Heart right ventricle (tissue), 16 donors: ENCODE measurements at regions of chr1 and their contacts with region 1.

Region 1: GRCh38 chr1:155591770-155592169 is 18.2 kb upstream of the MSTO1 start:
- DNase-seq: peak in 1 of 2 donors; percentile 50
- ATAC-seq: peak in 7 of 8 donors; percentile 59 to 81 (median 67)
- H3K4me3 ChIP-seq: no peak overlapping the region
- H3K27ac ChIP-seq: no peak overlapping the region
- H3K4me1 ChIP-seq: peaks cover 0 to 6% (median 0%) of the 10 kb centered on the region in 9 donors
- H3K27me3 ChIP-seq: no peaks in the 10 kb centered on the region
- CTCF ChIP-seq: peak in 8 of 9 donors; percentile 20 to 72 (median 65)

Region 2: GRCh38 chr1:155208541-155209311 is 383.0 kb before region 1 on chr1 and contains the start of gene MTX1:
- intact Hi-C with region 1: loop called in 3 of 10 experiments (anchors 2 to 10 kb)
- DNase-seq: peak; percentile 93 to 95
- ATAC-seq: peak; percentile 86 to 92 (median 90)
- H3K4me3 ChIP-seq: peak within 1 kb of the TSS; percentile 64 to 91 (median 82)
- H3K27ac ChIP-seq: peak within 1 kb of the TSS; percentile 98 to 100 (median 100)
- H3K4me1 ChIP-seq: peaks cover 9 to 43% (median 31%) of the 10 kb centered on the region in 9 donors
- H3K27me3 ChIP-seq: no peaks in the 10 kb centered on the region
- CTCF ChIP-seq: no peak
- total RNA-seq, gene MTX1: 13.1 to 25.8 (median 17.1) TPM

Region 3: DNA sequence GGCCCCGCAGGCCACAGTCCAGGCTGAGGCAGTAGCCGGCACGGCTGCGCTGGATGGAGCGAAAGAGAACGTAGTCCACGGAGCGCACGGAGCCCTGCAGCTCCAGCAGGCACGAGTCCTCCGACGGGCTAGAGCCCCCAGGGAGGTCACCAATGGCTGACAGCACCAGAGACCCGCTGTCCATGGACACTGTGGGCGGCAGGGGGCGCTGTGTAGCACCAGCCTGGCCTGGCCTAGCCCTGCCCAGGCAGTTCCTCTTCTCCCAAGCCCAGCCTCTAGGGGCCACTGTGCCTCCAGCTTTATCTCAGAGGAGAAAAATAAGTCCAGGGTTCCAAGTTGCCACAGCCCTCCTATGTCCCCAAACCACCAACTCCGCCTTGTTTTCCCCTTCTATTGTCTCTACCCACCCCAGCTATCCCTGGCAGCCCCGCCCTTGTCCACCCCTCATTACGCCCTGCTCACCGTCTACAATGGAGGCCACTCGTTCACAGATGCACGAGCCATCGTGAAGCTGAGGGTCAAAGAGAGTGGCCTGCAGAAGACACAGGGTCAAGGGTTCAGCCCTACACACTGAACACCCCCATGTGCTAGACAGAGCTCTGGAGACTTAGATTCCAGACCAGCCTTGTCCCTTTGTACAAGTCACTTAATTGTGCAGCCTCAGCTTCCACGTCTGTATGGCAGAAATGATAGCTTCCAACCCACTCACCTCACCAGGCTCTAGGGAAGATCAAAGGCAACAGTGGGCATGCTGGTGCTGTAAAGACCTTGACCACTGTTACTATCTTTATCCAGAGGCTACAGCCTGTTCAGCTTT is 340.9 kb before region 1 on chr1:
- intact Hi-C with region 1: loop called in 8 of 10 experiments (anchors 1 to 10 kb)
- DNase-seq: peak; percentile 93 to 95
- ATAC-seq: peak; percentile 80 to 89 (median 84)
- H3K4me3 ChIP-seq: peak overlapping the region in 7 of 10 donors; percentile 12 to 57 (median 37)
- H3K27ac ChIP-seq: peak overlapping the region in 8 of 10 donors; percentile 15 to 90 (median 38)
- H3K4me1 ChIP-seq: peaks cover 12 to 36% (median 29%) of the 10 kb centered on the region in 9 donors
- H3K27me3 ChIP-seq: no peaks in the 10 kb centered on the region
- CTCF ChIP-seq: peak in 8 of 9 donors; percentile 99 to 100 (median 100)

Region 4: GRCh38 chr1:155329971-155330598 is 261.7 kb before region 1 on chr1:
- intact Hi-C with region 1: loop called in 2 of 10 experiments (anchors 10 kb)
- DNase-seq: no peak
- ATAC-seq: no peak
- H3K4me3 ChIP-seq: no peak overlapping the region
- H3K27ac ChIP-seq: no peak overlapping the region
- H3K4me1 ChIP-seq: peaks cover 0 to 15% (median 7%) of the 10 kb centered on the region in 9 donors
- H3K27me3 ChIP-seq: no peaks in the 10 kb centered on the region
- CTCF ChIP-seq: no peak

Region 5: GRCh38 chr1:155640367-155640766 is 48.6 kb after region 1 on chr1:
- intact Hi-C with region 1: no loop called
- DNase-seq: no peak
- ATAC-seq: no peak
- H3K4me3 ChIP-seq: no peak overlapping the region
- H3K27ac ChIP-seq: no peak overlapping the region
- H3K4me1 ChIP-seq: peaks cover 0 to 28% (median 5%) of the 10 kb centered on the region in 9 donors
- H3K27me3 ChIP-seq: no peaks in the 10 kb centered on the region
- CTCF ChIP-seq: no peak

Region 6: GRCh38 chr1:155651861-155652661 is 60.3 kb after region 1 on chr1:
- intact Hi-C with region 1: loop called in 1 of 10 experiments (anchors 10 kb)
- DNase-seq: no peak
- ATAC-seq: no peak
- H3K4me3 ChIP-seq: no peak overlapping the region
- H3K27ac ChIP-seq: no peak overlapping the region
- H3K4me1 ChIP-seq: peaks cover 0 to 23% (median 4%) of the 10 kb centered on the region in 9 donors
- H3K27me3 ChIP-seq: no peaks in the 10 kb centered on the region
- CTCF ChIP-seq: no peak

Region 7: GRCh38 chr1:156571949-156572662 is 980.3 kb after region 1 on chr1 and contains the start of gene IQGAP3:
- intact Hi-C with region 1: no loop called
- DNase-seq: peak; percentile 81 to 90
- ATAC-seq: peak; percentile 88 to 97 (median 95)
- H3K4me3 ChIP-seq: peak within 1 kb of the TSS in 9 of 10 donors; percentile 24 to 62 (median 53)
- H3K27ac ChIP-seq: peak within 1 kb of the TSS in 1 of 10 donors; percentile 31
- H3K4me1 ChIP-seq: peaks cover 0 to 18% (median 13%) of the 10 kb centered on the region in 9 donors
- H3K27me3 ChIP-seq: peaks cover 0 to 4% (median 0%) of the 10 kb centered on the region in 7 donors
- CTCF ChIP-seq: no peak
- total RNA-seq, gene IQGAP3: 0.07 to 3.8 (median 0.39) TPM